ENCODE measurements at regions of chr6 and their contacts with region 1.

Region 1: DNA sequence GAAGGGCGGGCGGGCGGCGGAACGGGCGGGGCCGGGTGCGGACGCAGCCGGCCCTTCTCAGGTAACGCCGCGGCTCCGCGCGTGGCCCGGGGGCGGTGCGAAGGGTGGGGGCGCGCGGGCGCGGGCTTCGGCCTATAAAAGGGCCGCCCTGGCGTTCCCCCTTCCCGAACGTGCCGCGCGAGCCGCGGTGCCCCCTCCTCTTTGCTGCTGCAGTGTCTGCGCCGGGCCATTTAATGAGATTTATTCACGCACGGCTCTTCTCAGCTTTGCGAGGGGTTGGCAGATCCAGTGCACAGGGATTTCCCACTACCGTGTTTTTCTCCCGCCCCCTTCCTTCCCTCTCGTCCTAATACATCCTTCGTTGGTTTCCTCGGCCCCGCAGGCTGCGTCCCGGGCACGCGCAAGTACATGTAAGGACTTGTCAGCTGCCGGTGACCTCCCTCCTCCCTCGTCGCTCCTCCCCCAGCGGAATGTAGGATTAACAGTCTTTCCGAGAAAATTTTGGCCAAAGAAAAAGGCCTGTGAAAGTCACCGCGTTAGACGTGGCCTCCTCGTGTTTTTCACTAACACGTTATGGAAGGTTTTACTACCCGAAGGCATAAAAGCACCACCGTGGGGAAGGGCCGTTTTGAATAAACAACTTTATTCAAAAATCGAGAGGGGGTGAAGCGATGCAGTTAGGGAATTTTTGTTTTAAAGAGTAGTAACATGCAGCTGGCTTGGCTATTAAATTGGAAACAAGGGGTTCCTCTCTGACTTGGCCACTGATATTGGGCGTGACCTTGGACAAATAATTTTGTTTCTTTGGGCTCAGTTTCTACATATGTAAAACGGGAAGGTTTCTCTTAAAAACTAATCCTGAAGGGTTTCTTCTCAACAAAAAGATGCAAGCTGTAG is 966 bp upstream of the REV3L start:
- DNase-seq: peak; percentile 92
- H3K4me3 Mint-ChIP-seq: peak overlapping the region; percentile 97
- H3K27ac Mint-ChIP-seq: peak overlapping the region; percentile 99
- H3K4me1 Mint-ChIP-seq: peaks cover 56% of the 10 kb centered on the region
- H3K27me3 Mint-ChIP-seq: no peaks in the 10 kb centered on the region

Region 2: DNA sequence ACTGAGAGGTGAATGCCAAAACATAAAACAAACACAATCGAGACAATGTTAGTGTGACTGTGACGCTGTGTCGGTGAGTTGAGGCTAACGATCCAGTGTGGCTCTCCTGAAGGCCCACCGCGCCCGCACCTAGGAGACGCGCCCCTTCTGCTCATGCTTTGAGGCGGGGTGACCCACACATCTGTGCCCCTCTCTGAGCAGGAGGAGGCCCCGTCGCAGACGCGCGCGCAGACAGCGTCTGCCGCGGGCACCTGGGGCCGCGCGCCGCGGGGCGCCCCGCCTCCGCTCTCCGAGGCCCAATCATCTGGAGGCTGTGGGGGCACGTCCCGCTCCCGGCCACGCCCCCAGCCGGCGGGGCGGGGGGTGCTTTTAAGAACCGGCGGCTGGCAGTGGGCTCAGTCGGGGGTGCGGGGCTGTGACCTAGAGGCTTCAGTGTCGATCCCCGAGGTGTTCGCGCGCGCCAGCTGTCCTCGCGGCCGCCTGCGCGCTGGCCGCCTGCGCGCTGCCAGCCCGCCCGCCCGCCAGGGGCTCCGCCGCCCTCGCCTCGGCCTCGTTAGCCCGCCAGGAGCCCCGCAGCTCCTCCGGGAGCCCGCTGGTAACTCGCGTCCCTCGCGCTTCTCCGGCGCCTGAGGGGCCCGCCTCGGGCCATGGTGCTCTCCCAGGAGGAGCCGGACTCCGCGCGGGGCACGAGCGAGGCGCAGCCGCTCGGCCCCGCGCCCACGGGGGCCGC is 396.7 kb before region 1 on chr6 and contains the start of gene SLC16A10:
- CTCF ChIA-PET with region 1: no interaction called
- POLR2A ChIA-PET with region 1: no interaction called
- intact Hi-C with region 1: loop called (anchors 1 kb)
- DNase-seq: peak; percentile 79
- H3K4me3 Mint-ChIP-seq: peak within 1 kb of the TSS; percentile 77
- H3K27ac Mint-ChIP-seq: peak within 1 kb of the TSS; percentile 8
- H3K4me1 Mint-ChIP-seq: peaks cover 28% of the 10 kb centered on the region
- H3K27me3 Mint-ChIP-seq: peaks cover 11% of the 10 kb centered on the region
- total RNA-seq, gene SLC16A10: 3.4 to 3.6 TPM

Region 3: GRCh38 chr6:111105578-111105977 is 378.4 kb before region 1 on chr6:
- CTCF ChIA-PET with region 1: no interaction called
- POLR2A ChIA-PET with region 1: no interaction called
- intact Hi-C with region 1: no loop called
- DNase-seq: peak; percentile 58
- H3K4me3 Mint-ChIP-seq: no peak overlapping the region
- H3K27ac Mint-ChIP-seq: no peak overlapping the region
- H3K4me1 Mint-ChIP-seq: peaks cover 8% of the 10 kb centered on the region
- H3K27me3 Mint-ChIP-seq: no peaks in the 10 kb centered on the region

Region 4: GRCh38 chr6:111406200-111406721 is 77.7 kb before region 1 on chr6:
- CTCF ChIA-PET with region 1: interaction called, 5 read pairs
- POLR2A ChIA-PET with region 1: no interaction called
- intact Hi-C with region 1: loop called (anchors 1 kb)
- DNase-seq: no peak
- H3K4me3 Mint-ChIP-seq: no peak overlapping the region
- H3K27ac Mint-ChIP-seq: peak overlapping the region; percentile 25
- H3K4me1 Mint-ChIP-seq: peaks cover 13% of the 10 kb centered on the region
- H3K27me3 Mint-ChIP-seq: no peaks in the 10 kb centered on the region

Region 5: GRCh38 chr6:111605100-111605751 is 121.2 kb after region 1 on chr6:
- CTCF ChIA-PET with region 1: interaction called, 7 read pairs
- POLR2A ChIA-PET with region 1: interaction called, 25 read pairs
- intact Hi-C with region 1: loop called (anchors 1 kb)
- DNase-seq: peak; percentile 43
- H3K4me3 Mint-ChIP-seq: peak overlapping the region; percentile 81
- H3K27ac Mint-ChIP-seq: peak overlapping the region; percentile 93
- H3K4me1 Mint-ChIP-seq: peaks cover 48% of the 10 kb centered on the region
- H3K27me3 Mint-ChIP-seq: no peaks in the 10 kb centered on the region

Region 6: GRCh38 chr6:111789598-111789997 is 305.6 kb after region 1 on chr6:
- CTCF ChIA-PET with region 1: no interaction called
- POLR2A ChIA-PET with region 1: no interaction called
- intact Hi-C with region 1: no loop called
- DNase-seq: no peak
- H3K4me3 Mint-ChIP-seq: no peak overlapping the region
- H3K27ac Mint-ChIP-seq: no peak overlapping the region
- H3K4me1 Mint-ChIP-seq: peaks cover 61% of the 10 kb centered on the region
- H3K27me3 Mint-ChIP-seq: no peaks in the 10 kb centered on the region

Region 7: DNA sequence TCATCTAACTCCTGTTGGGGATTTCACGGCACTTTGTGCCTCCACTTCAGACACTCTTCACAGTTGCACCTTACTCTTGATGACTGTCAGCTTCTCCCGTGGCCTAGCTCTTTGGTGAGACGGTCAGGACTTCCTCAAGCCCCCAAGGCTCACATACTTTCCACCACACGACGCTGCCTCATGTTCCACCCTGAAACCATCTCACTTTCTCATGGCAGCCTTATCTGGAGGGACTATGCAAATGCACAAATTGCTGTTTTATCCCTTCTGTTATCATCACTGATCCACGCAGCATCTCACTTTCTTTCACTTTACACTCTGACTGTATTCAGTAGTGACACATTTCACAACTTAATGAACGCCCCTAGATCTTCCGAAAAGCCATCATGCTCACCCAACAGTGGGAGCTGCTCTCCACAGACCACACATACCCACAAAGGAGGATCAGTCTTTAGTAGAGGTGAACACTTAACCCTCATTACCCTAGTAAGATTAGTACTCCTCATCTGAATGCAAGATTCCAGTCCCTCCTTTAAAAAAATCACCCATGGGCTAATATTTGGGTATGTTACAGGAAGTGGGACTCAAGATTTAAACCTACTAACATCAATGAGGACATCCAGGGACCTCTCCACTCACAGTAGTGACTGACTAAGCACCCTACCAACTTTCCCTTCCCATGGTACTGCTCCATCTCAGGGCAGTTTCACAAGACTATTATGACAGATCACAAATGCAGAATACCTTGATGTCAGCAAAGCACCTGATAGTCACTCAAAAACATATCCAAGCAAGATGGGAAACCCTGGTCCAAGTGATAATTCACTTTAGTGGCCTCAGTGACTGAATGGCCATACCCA is 353.9 kb after region 1 on chr6:
- CTCF ChIA-PET with region 1: no interaction called
- POLR2A ChIA-PET with region 1: no interaction called
- intact Hi-C with region 1: loop called (anchors 10 kb)
- DNase-seq: peak; percentile 77
- H3K4me3 Mint-ChIP-seq: peak overlapping the region; percentile 54
- H3K27ac Mint-ChIP-seq: peak overlapping the region; percentile 91
- H3K4me1 Mint-ChIP-seq: peaks cover 37% of the 10 kb centered on the region
- H3K27me3 Mint-ChIP-seq: no peaks in the 10 kb centered on the region

Region 8: GRCh38 chr6:112087136-112087911 is 603.3 kb after region 1 on chr6 and contains the starts of genes FAM229B and TUBE1:
- CTCF ChIA-PET with region 1: no interaction called
- POLR2A ChIA-PET with region 1: interaction called, 3 read pairs
- intact Hi-C with region 1: loop called (anchors 1 kb)
- DNase-seq: peak; percentile 94
- H3K4me3 Mint-ChIP-seq: no peak within 1 kb of the TSS
- H3K27ac Mint-ChIP-seq: no peak within 1 kb of the TSS
- H3K4me1 Mint-ChIP-seq: peaks cover 9% of the 10 kb centered on the region
- H3K27me3 Mint-ChIP-seq: peaks cover 11% of the 10 kb centered on the region
- total RNA-seq, gene FAM229B: 6.7 to 7.3 TPM
- total RNA-seq, gene TUBE1: 37.2 to 39.2 TPM

Measured in activated CD4-positive, alpha-beta memory T cell treated with anti-CD3 and anti-CD28 coated beads for 36 hours (primary cell).